SK-N-SH (cell line): ENCODE measurements at regions of chr6 and their contacts with region 1.

Region 1: DNA sequence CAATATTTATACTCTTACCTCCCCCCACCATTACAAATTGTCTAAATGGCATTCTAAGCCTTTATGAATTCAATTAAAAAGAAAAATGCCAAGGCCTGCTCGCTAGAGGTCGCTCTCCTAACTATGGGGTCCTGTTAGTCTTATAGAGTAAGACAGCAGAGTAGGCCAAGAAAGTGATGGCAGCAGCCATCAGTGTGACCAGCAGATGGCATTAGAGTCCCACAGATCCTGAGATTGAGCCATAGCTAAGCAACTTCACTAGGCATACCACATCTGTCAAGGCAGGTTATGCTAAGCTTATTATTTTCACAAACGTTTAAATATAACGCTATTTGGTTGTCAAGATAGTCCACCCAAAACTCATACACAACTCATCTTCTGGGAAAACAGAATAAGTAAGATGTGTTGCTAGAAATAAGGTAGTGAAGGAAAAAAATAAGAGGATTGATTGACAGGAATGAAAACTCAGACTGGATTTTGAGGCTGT is 57.6 kb upstream of the SCAF8 start:
- DNase-seq: peak; percentile 86
- H3K4me3 ChIP-seq: peak overlapping the region in 1 of 2 experiments; percentile 49; a peak in 1 of 4 replicates
- H3K27ac ChIP-seq: no peak overlapping the region
- H3K4me1 ChIP-seq: no peaks in the 10 kb centered on the region
- H3K27me3 ChIP-seq: no peaks in the 10 kb centered on the region
- CTCF ChIP-seq: peak; percentile 100
- EP300 ChIP-seq: peak in 1 of 2 experiments; percentile 52; a peak in 1 of 4 replicates
- RAD21 ChIP-seq: peak; percentile 100

Region 2: GRCh38 chr6:154510143-154510905 is 165.3 kb before region 1 on chr6 and contains the start of gene CNKSR3:
- CTCF ChIA-PET with region 1: interaction called, 11 read pairs
- POLR2A ChIA-PET with region 1: no interaction called
- DNase-seq: peak; percentile 93
- H3K4me3 ChIP-seq: peak within 1 kb of the TSS; percentile 83 to 95
- H3K27ac ChIP-seq: peak within 1 kb of the TSS; percentile 80 to 94
- H3K4me1 ChIP-seq: peaks cover 14 to 21% of the 10 kb centered on the region in 2 experiments; a peak in 3 of 4 replicates
- H3K27me3 ChIP-seq: no peaks in the 10 kb centered on the region
- CTCF ChIP-seq: 0 out of 2 replicates have a peak, but pooled peaks have one; percentile 12
- EP300 ChIP-seq: no peak; a peak in 1 of 4 replicates
- RAD21 ChIP-seq: peak; percentile 28
- polyA plus RNA-seq, gene CNKSR3: 1.6 TPM in 2 replicates

Region 3: DNA sequence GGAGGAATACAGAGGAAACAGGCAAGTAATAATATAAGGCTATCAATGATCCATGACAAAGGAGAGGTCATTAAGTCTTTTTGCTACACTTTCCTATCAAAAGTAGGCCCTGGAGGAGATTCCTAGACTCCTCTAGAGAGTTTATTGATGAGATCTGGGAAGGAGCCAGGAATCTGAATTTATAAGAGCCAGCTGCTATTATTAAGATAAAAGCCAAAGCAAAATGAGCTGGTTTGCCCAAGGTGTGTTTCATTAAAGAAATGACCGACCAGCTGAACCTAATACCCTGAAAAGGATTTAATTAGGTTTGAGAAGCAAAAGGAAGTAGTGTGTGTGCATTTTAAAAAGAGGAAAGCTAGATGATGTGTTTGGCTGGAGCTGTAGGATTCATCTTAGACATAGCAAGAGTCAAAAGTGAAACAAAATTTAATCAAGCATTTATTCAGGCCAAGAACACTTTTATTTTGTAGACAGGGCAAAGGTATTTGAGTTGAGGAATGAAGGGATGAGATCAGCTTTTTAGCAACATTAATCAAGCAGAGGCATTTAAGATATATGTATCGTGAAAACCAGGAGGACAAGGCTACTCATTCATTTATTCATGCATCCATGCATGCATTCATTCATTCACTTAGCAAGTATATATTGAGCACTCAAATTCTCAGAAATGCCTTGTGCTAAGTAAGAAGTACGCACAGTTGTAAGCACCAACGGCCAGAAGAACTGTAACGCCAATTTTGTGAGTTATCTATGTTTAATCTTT is 14.0 kb after region 1 on chr6:
- CTCF ChIA-PET with region 1: interaction called, 21 read pairs
- POLR2A ChIA-PET with region 1: no interaction called
- DNase-seq: no peak
- H3K4me3 ChIP-seq: no peak overlapping the region
- H3K27ac ChIP-seq: no peak overlapping the region
- H3K4me1 ChIP-seq: no peaks in the 10 kb centered on the region
- H3K27me3 ChIP-seq: no peaks in the 10 kb centered on the region
- CTCF ChIP-seq: no peak
- EP300 ChIP-seq: no peak
- RAD21 ChIP-seq: no peak

Region 4: GRCh38 chr6:154797857-154798256 is 122.2 kb after region 1 on chr6:
- CTCF ChIA-PET with region 1: interaction called, 135 read pairs
- POLR2A ChIA-PET with region 1: no interaction called
- DNase-seq: no peak
- H3K4me3 ChIP-seq: no peak overlapping the region
- H3K27ac ChIP-seq: no peak overlapping the region
- H3K4me1 ChIP-seq: peaks cover 0 to 2% of the 10 kb centered on the region in 2 experiments; a peak in 1 of 4 replicates
- H3K27me3 ChIP-seq: no peaks in the 10 kb centered on the region
- CTCF ChIP-seq: no peak
- EP300 ChIP-seq: no peak
- RAD21 ChIP-seq: no peak

Region 5: GRCh38 chr6:154814063-154814462 is 138.4 kb after region 1 on chr6:
- CTCF ChIA-PET with region 1: interaction called, 135 read pairs
- POLR2A ChIA-PET with region 1: no interaction called
- DNase-seq: no peak
- H3K4me3 ChIP-seq: no peak overlapping the region
- H3K27ac ChIP-seq: no peak overlapping the region
- H3K4me1 ChIP-seq: peaks cover 0 to 2% of the 10 kb centered on the region in 2 experiments; a peak in 1 of 4 replicates
- H3K27me3 ChIP-seq: no peaks in the 10 kb centered on the region
- CTCF ChIP-seq: no peak
- EP300 ChIP-seq: no peak
- RAD21 ChIP-seq: no peak

Region 6: GRCh38 chr6:154914288-154914687 is 238.6 kb after region 1 on chr6:
- CTCF ChIA-PET with region 1: interaction called, 10 read pairs
- POLR2A ChIA-PET with region 1: no interaction called
- DNase-seq: no peak
- H3K4me3 ChIP-seq: no peak overlapping the region
- H3K27ac ChIP-seq: no peak overlapping the region
- H3K4me1 ChIP-seq: no peaks in the 10 kb centered on the region; a peak in 1 of 4 replicates
- H3K27me3 ChIP-seq: no peaks in the 10 kb centered on the region
- CTCF ChIP-seq: no peak
- EP300 ChIP-seq: no peak
- RAD21 ChIP-seq: no peak

Region 7: DNA sequence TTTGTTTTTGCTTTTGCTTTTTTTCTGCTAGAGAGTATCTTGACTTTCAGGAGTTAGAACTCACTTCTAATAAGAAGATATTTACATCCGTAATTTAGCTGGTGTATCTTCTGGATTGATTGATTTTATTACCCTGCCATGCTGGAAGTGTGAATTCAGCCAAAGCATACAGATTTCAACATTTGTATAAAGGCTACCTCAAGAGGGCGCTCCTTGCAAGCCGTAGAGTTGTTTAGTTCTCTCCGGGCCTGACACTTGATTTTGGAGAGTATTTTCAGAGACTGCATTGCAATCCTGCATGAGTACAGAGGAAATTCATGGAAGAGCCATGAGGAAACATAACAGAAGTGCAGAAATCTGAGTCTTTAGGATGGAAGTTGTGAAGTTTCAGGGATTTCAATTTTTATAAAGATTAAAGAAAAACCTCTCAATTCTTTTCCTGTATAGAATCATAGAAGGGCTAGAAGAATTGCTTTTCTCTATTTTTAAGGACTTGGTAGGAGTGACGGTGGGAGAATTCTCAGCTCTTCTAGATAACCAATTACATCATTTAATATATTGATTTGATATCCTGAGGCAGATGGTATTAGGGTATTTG is 252.8 kb after region 1 on chr6:
- CTCF ChIA-PET with region 1: interaction called, 19 read pairs
- POLR2A ChIA-PET with region 1: no interaction called
- DNase-seq: peak; percentile 62
- H3K4me3 ChIP-seq: no peak overlapping the region
- H3K27ac ChIP-seq: no peak overlapping the region
- H3K4me1 ChIP-seq: peaks cover 33 to 39% of the 10 kb centered on the region in 2 experiments
- H3K27me3 ChIP-seq: no peaks in the 10 kb centered on the region
- CTCF ChIP-seq: peak; percentile 80
- EP300 ChIP-seq: no peak
- RAD21 ChIP-seq: peak; percentile 97

Region 8: GRCh38 chr6:155103816-155104366 is 428.2 kb after region 1 on chr6:
- CTCF ChIA-PET with region 1: no interaction called
- POLR2A ChIA-PET with region 1: no interaction called
- DNase-seq: no peak
- H3K4me3 ChIP-seq: no peak overlapping the region
- H3K27ac ChIP-seq: peak overlapping the region in 1 of 2 experiments; percentile 62; a peak in 3 of 4 replicates
- H3K4me1 ChIP-seq: peaks cover 9 to 10% of the 10 kb centered on the region in 2 experiments; a peak in 2 of 4 replicates
- H3K27me3 ChIP-seq: no peaks in the 10 kb centered on the region
- CTCF ChIP-seq: no peak
- EP300 ChIP-seq: no peak
- RAD21 ChIP-seq: no peak